ENCODE measurements at regions of chr10 and their contacts with region 1.

Region 1: GRCh38 chr10:62405137-62405536 is 31.0 kb downstream of the ZNF365 start:
- DNase-seq: peak in 1 of 10 donors; percentile 40
- H3K4me3 ChIP-seq: no peak overlapping the region
- H3K27ac ChIP-seq: peak overlapping the region in 49 of 59 donors; percentile 26 to 90 (median 74)
- H3K27me3 ChIP-seq: no peaks in the 10 kb centered on the region
- CTCF ChIP-seq: no peak

Region 2: GRCh38 chr10:62130948-62131347 is 274.2 kb before region 1 on chr10:
- intact Hi-C with region 1: no loop called
- DNase-seq: no peak
- H3K4me3 ChIP-seq: no peak overlapping the region
- H3K27ac ChIP-seq: no peak overlapping the region
- H3K27me3 ChIP-seq: no peaks in the 10 kb centered on the region
- CTCF ChIP-seq: no peak

Region 3: GRCh38 chr10:62297857-62298256 is 107.3 kb before region 1 on chr10:
- intact Hi-C with region 1: loop called in 1 of 2 experiments (anchors 1 kb)
- DNase-seq: peak in 4 of 10 donors; percentile 9 to 55 (median 46)
- H3K4me3 ChIP-seq: no peak overlapping the region
- H3K27ac ChIP-seq: peak overlapping the region in 13 of 59 donors; percentile 1 to 63 (median 34)
- H3K27me3 ChIP-seq: no peaks in the 10 kb centered on the region
- CTCF ChIP-seq: no peak